Gastrocnemius medialis (tissue), 4 donors: ENCODE measurements at regions of chr3 and their contacts with region 1.

Region 1: DNA sequence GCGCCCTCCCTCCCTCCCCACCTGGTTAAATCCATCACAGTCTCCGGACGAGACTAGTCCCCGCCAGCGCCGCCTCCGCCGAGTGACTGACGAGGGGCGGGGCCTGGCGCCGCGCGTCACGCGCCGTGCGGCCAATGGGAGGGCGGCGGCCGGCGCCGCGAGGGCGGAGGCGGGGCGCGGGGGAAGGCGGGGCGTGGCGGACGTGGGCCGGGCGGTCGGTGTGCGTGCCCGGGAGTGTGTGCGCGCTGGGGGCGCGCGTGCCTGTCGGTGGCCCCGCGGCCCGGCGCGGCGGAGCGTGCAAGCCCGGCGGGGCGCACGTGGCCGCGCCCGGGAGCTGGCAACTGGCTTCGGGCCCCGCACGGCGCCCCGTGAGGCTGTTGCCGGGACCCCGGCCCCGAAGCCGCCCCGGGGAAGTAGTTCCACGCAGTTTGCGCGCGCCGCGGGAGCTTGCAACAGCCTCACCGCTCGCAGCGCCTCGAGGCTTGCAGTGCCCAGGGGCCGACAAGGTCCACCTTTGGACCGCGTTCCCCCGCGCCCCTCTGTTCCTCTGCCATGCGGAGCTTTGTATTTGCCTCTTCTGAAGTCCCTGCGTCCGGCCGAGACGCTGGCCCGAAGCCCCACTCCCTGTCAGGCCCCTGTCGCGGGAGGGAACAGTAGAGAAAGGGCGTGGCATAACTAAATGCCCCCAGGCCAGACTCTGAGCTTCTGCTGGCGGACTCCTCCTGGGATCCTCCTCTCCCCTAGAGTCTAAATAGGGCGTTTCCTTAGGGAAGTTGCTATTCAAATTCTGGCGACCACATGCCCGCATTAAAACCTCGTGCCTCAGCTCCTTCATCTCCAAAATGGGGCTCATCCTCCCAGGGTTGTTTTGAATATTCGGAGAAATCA is 400.9 kb downstream of the SHQ1 start:
- DNase-seq: peak; percentile 82 to 87
- ATAC-seq: peak; percentile 91 to 92
- H3K4me3 ChIP-seq: peak overlapping the region; percentile 74 to 89 (median 79)
- H3K27ac ChIP-seq: peak overlapping the region; percentile 83 to 92 (median 91)
- H3K4me1 ChIP-seq: peaks cover 21 to 23% of the 10 kb centered on the region in 2 donors
- H3K27me3 ChIP-seq: no peaks in the 10 kb centered on the region
- CTCF ChIP-seq: peak in 1 of 5 experiments; percentile 7
- POLR2A ChIP-seq: peak; percentile 50 to 53

Region 2: DNA sequence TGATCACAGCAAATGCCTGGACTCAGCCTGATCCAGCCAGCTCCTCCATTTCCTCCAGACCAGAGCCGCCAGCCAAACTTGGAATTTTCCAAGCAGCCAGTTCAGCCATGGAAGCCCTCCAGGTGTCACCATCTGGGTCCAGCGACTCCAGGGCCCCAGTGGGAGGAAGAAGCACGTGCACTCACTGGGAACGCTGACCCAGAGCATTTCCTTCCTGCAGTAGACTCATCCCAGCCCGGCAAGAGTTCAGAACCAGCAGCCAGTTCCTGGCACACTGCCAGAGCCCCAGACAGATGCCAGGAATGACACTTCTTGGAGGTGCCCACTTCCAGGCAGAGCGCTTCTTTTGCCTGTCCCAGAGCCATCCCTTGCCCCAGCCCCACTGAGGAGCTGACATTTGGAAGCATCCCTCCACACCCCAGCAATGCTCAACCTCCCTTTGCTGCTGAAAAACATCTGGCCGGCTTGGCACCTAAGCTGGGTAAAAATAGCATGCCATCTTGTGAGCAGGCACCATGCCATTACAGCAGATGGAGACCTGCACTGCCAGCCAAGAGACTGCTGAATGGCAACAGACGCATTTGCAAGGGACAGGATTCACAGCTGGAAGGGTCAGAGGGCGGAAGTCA is 202.0 kb before region 1 on chr3:
- in situ Hi-C with region 1: no loop called
- intact Hi-C with region 1: loop called (anchors 10 kb)
- DNase-seq: peak; percentile 61 to 84
- ATAC-seq: peak; percentile 92 to 93
- H3K4me3 ChIP-seq: no peak overlapping the region
- H3K27ac ChIP-seq: peak overlapping the region in 3 of 4 donors; percentile 21 to 48 (median 46)
- H3K4me1 ChIP-seq: peaks cover 8 to 21% of the 10 kb centered on the region in 2 donors
- H3K27me3 ChIP-seq: no peaks in the 10 kb centered on the region
- CTCF ChIP-seq: no peak
- POLR2A ChIP-seq: no peak

Region 3: DNA sequence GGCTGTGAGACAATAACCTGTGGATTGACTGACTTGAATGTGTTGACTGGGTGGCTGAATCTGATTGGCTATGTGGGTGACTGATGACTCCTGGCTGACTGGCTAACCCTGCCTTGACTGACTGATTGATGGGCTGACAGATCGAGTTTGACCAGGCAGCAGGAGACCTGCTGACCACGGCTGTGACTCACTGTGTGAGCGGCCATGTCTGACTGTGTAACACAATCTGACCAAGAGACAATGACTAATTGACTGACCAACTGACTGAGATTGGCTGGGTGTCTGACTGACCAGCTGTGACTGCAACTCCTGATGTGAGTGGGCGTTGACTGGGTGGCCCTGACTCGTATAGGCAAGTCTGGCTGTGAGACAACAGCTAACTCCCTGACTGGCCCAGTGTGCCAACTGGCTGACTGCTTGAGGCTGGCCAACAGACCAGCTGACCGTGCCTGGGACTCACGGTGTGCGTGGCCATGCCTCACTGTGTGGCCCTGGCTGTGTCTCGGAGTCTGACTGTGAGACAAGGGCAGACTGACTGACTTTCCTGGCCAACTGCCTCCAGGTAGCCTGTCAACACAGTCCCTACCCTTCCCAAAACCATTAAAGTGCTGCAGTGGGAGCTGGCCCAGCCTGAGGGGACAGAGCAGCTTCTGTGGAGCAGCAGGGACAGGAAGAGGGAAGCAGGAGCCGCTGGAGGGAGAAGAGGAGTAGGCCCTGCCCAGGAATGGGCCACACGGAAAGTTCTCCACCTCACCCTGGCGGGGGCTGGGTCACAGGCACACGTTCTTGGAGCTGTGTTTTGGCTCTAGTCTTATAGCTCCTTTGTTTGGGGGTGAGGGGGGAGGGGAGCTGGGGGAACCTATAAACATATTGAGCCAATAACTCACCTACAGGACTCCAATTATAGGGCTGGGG is 107.9 kb before region 1 on chr3:
- in situ Hi-C with region 1: no loop called
- intact Hi-C with region 1: loop called (anchors 2 kb)
- DNase-seq: peak; percentile 72 to 81
- ATAC-seq: peak; percentile 86 to 87
- H3K4me3 ChIP-seq: no peak overlapping the region
- H3K27ac ChIP-seq: peak overlapping the region; percentile 10 to 67 (median 42)
- H3K4me1 ChIP-seq: peaks cover 8 to 13% of the 10 kb centered on the region in 2 donors
- H3K27me3 ChIP-seq: no peaks in the 10 kb centered on the region
- CTCF ChIP-seq: no peak
- POLR2A ChIP-seq: no peak

Region 4: GRCh38 chr3:72482589-72483321 is 35.5 kb after region 1 on chr3:
- in situ Hi-C with region 1: no loop called
- intact Hi-C with region 1: loop called (anchors 2 kb)
- DNase-seq: peak; percentile 66 to 91
- ATAC-seq: peak; percentile 98
- H3K4me3 ChIP-seq: peak overlapping the region; percentile 23 to 45 (median 42)
- H3K27ac ChIP-seq: peak overlapping the region; percentile 75 to 83 (median 79)
- H3K4me1 ChIP-seq: peaks cover 12 to 23% of the 10 kb centered on the region in 2 donors
- H3K27me3 ChIP-seq: no peaks in the 10 kb centered on the region
- CTCF ChIP-seq: no peak
- POLR2A ChIP-seq: peak; percentile 4 to 22

Region 5: GRCh38 chr3:72629191-72629631 is 181.9 kb after region 1 on chr3:
- in situ Hi-C with region 1: no loop called
- intact Hi-C with region 1: no loop called
- DNase-seq: no peak
- ATAC-seq: no peak
- H3K4me3 ChIP-seq: no peak overlapping the region
- H3K27ac ChIP-seq: no peak overlapping the region
- H3K4me1 ChIP-seq: no peaks in the 10 kb centered on the region
- H3K27me3 ChIP-seq: no peaks in the 10 kb centered on the region
- CTCF ChIP-seq: no peak
- POLR2A ChIP-seq: no peak

Region 6: DNA sequence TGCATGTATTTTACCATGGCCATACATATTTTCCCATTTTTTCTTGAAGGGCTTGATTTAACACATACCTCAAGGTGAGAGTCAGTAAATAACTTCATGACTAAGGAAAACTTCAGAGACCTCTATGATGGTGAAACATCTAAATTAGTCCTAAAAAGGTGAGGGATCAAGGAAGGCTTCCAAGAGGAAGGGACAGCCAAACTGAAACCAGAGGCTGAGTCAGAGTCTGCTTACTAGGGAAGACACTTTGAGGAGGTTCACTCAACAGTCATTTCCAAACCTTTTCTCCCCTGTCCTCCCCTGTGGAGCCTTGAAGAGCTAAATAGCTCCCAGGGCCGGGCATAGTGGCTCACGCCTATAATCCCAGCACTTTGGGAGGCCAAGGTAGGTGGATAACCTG is 194.4 kb after region 1 on chr3:
- in situ Hi-C with region 1: no loop called
- intact Hi-C with region 1: no loop called
- DNase-seq: no peak
- ATAC-seq: no peak
- H3K4me3 ChIP-seq: no peak overlapping the region
- H3K27ac ChIP-seq: no peak overlapping the region
- H3K4me1 ChIP-seq: no peaks in the 10 kb centered on the region
- H3K27me3 ChIP-seq: peaks cover 0 to 3% (median 0%) of the 10 kb centered on the region in 3 donors
- CTCF ChIP-seq: no peak
- POLR2A ChIP-seq: no peak

Region 7: GRCh38 chr3:72708441-72708840 is 261.1 kb after region 1 on chr3:
- in situ Hi-C with region 1: no loop called
- intact Hi-C with region 1: no loop called
- DNase-seq: no peak
- ATAC-seq: no peak
- H3K4me3 ChIP-seq: no peak overlapping the region
- H3K27ac ChIP-seq: no peak overlapping the region
- H3K4me1 ChIP-seq: no peaks in the 10 kb centered on the region
- H3K27me3 ChIP-seq: no peaks in the 10 kb centered on the region
- CTCF ChIP-seq: no peak
- POLR2A ChIP-seq: no peak

Region 8: GRCh38 chr3:72720566-72720965 is 273.3 kb after region 1 on chr3:
- in situ Hi-C with region 1: no loop called
- intact Hi-C with region 1: no loop called
- DNase-seq: no peak
- ATAC-seq: no peak
- H3K4me3 ChIP-seq: no peak overlapping the region
- H3K27ac ChIP-seq: no peak overlapping the region
- H3K4me1 ChIP-seq: no peaks in the 10 kb centered on the region
- H3K27me3 ChIP-seq: no peaks in the 10 kb centered on the region
- CTCF ChIP-seq: no peak
- POLR2A ChIP-seq: no peak

Region 9: GRCh38 chr3:73624821-73625665 is 1177.7 kb after region 1 on chr3 and contains the start of gene PDZRN3:
- in situ Hi-C with region 1: no loop called
- intact Hi-C with region 1: loop called (anchors 10 kb)
- DNase-seq: peak; percentile 41 to 44
- ATAC-seq: peak; percentile 46 to 48
- H3K4me3 ChIP-seq: peak within 1 kb of the TSS; percentile 71 to 93 (median 78)
- H3K27ac ChIP-seq: peak within 1 kb of the TSS; percentile 89 to 94 (median 92)
- H3K4me1 ChIP-seq: peaks cover 34 to 56% of the 10 kb centered on the region in 2 donors
- H3K27me3 ChIP-seq: no peaks in the 10 kb centered on the region
- CTCF ChIP-seq: peak in 1 of 5 experiments; percentile 3
- POLR2A ChIP-seq: peak; percentile 64 to 83
- total RNA-seq, gene PDZRN3: 9.1 to 30.3 (median 24.7) TPM